Transverse colon (tissue), 4 donors: ENCODE measurements at regions of chr2 and their contacts with region 1.

Region 1: GRCh38 chr2:113818382-113818951 is 62.0 kb upstream of the SLC35F5 start:
- DNase-seq: peak; percentile 52
- H3K4me3 ChIP-seq: no peak overlapping the region
- H3K27ac ChIP-seq: peak overlapping the region; percentile 18 to 57 (median 34)
- H3K4me1 ChIP-seq: peaks cover 0 to 14% (median 12%) of the 10 kb centered on the region in 4 donors
- H3K27me3 ChIP-seq: no peaks in the 10 kb centered on the region
- CTCF ChIP-seq: no peak
- EP300 ChIP-seq: no peak
- POLR2A ChIP-seq: no peak

Region 2: DNA sequence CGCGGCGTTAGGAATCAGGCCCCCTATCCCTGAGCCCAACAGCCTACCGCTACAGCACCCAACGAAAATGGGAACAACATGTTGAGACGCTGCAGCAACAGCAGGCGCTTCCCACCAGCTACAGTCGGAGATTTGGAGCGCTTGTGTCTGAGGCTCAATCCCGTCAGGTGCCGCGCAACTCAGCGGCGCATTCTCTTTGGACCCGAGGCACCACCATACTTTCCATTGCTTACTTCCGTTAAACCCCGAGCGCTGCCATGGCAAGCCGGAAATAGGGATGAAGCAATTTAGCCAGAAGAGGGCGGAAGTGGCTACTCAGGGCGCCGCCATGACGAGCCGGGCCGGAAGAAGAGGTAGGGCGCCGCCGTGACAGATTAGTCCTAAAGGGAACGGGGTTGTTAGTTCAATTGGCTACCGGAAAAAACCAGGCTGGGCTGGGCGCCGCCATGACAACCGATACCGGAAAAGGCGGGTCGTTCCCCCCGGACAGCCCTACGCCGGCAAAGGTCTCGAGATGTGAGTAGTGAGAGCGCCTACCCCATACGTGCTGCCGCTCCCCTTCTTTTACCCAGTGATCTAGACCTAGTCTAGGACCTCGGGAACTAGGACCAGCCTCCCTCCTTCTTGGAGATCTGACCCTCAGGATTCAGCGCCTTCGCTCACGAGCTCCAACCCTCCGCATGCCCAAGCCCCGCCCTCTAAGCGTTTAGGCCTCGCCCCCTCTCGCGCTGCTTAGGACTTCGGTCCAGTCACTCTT is 1234.2 kb before region 1 on chr2 and contains the start of gene CHCHD5:
- in situ Hi-C with region 1: no loop called
- intact Hi-C with region 1: no loop called
- DNase-seq: peak; percentile 95
- H3K4me3 ChIP-seq: peak within 1 kb of the TSS; percentile 48 to 73 (median 56)
- H3K27ac ChIP-seq: peak within 1 kb of the TSS; percentile 87 to 97 (median 94)
- H3K4me1 ChIP-seq: peaks cover 6 to 22% (median 12%) of the 10 kb centered on the region in 4 donors
- H3K27me3 ChIP-seq: no peaks in the 10 kb centered on the region
- CTCF ChIP-seq: peak in 4 of 5 experiments; percentile 16 to 35 (median 28)
- EP300 ChIP-seq: no peak
- POLR2A ChIP-seq: peak; percentile 63
- total RNA-seq, gene CHCHD5: 11.1 to 23.0 (median 17.1) TPM

Region 3: DNA sequence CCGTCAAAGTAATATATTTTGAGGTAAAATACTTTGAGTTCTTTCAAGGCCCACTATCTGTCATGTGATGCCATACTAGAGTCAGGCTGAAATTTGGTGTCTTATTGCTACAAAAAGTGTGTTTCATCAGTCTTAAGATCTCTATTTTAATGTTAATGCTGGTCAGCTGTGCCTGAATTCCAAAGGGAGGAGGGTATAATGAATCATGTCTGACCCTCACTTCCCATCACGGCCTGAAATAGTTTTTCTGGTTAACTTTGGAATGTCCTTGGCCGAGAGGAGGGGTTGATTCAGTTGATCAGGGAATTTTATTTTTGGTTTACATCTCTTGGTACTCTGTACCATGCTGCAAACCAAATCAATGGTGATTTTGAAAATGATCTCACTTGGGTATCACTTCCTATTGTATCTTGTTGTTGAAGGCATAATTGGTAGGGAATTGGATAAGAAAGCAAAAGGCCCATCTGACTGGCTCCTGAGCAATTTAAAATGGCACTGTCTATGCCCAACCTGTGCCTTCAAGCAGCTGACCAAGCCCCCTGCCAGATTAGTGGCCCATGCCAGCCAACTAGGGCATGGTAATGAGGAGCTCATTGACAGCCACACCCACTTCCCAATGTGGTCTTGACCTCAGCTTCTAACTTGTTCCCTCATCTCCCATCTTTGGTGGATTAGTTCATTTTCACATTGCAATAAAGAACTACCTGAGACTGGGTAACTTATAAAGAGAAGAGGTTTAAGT is 55.9 kb before region 1 on chr2:
- in situ Hi-C with region 1: loop called in 1 of 4 experiments (anchors 10 kb)
- intact Hi-C with region 1: no loop called
- DNase-seq: no peak
- H3K4me3 ChIP-seq: no peak overlapping the region
- H3K27ac ChIP-seq: no peak overlapping the region
- H3K4me1 ChIP-seq: peaks cover 0 to 13% (median 2%) of the 10 kb centered on the region in 4 donors
- H3K27me3 ChIP-seq: no peaks in the 10 kb centered on the region
- CTCF ChIP-seq: no peak
- EP300 ChIP-seq: no peak
- POLR2A ChIP-seq: no peak